ENCODE measurements at regions of chr1 and their contacts with region 1.

Region 1: DNA sequence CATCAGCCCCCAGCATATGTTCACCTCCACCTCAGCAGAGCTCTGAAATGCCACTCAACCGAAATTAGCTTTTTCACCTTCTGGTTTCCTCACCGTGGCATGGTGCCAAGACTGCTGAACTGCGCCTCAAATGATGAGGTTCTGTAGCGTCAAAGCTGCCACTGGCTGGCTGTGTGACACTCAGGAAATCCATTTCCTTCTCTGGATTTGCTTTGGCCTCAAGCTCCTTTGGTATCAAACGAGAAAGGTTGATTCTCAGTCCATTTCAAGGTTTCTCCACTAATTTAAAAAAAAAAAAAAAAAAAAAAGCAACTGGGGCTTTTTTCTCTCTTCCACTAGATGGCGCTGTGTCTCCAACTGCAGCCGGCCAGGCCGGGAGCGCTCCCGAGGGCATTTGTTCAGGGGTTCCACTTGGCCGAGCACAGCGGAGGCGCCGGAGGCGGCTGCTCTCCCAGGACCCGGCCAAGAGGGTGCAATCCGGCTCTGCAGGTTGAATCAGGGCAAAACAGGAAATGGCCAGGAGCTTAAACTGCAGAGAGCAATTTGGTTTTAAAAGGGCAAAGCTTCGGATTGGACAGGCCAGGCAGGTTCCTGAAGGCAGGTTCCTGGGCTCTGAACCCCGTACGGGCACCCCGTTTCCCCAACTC is 26.5 kb upstream of the PLA2G2C start:
- DNase-seq: peak; percentile 31
- ATAC-seq: peak; percentile 86
- H3K4me3 ChIP-seq: peak overlapping the region in 1 of 3 experiments; percentile 38; a peak in 1 of 6 replicates
- H3K27ac ChIP-seq: no peak overlapping the region
- H3K4me1 ChIP-seq: no peaks in the 10 kb centered on the region; the same call in 1 of the 2 replicates
- H3K27me3 ChIP-seq: peaks cover 0 to 39% of the 10 kb centered on the region in 2 experiments; a peak in 3 of 5 replicates
- CTCF ChIP-seq: peak; percentile 68
- EP300 ChIP-seq: no peak
- POLR2A ChIP-seq: no peak
- RAD21 ChIP-seq: peak; percentile 44; the same call in 1 of the 2 replicates

Region 2: DNA sequence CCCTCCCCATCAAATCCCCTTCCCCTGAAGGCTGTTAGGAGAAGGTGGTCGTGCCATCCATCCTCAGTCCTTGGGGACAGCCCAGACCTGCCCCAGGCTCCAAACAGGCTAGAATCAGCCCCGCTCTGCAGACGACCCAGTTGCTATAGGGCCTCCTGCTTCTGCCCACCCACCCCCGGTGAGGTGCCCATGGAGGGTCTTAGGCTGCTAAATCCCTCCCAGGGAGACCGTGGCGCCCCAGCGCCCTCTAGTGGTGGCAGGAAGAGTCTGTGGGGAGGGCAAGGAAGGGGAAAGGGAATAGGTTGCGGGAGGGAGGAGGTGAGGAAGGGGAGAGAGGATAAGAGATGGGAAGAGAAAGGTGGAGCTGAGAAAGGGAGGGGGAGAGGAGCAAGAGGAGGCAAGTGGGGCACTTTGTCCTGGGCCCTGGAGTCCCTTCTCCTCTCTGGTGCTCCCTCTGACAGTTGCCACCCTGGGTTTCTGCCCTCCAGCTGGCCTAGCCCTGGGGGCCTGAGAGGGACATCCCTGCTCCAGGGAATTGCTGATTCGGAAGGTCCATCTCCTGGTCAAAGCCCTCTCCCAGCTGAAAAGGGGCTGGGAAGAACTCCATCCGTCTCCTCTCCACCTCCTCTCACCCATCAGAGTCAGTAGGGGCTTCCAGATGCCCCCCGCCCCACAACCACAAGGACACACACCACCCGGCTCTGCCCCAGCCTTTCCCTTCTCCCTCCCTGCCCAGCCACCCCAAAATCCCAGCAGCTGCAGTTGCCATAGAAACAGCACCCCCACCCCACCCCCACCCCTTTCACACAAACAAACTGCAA is 217.8 kb after region 1 on chr1:
- CTCF ChIA-PET with region 1: interaction called, 5 read pairs
- POLR2A ChIA-PET with region 1: no interaction called
- in situ Hi-C with region 1: loop called (anchors 10 kb)
- intact Hi-C with region 1: no loop called
- DNase-seq: peak; percentile 24
- ATAC-seq: peak; percentile 80
- H3K4me3 ChIP-seq: no peak overlapping the region
- H3K27ac ChIP-seq: no peak overlapping the region
- H3K4me1 ChIP-seq: no peaks in the 10 kb centered on the region
- H3K27me3 ChIP-seq: peaks cover 0 to 11% of the 10 kb centered on the region in 2 experiments; a peak in 2 of 5 replicates
- CTCF ChIP-seq: peak; percentile 91
- EP300 ChIP-seq: no peak
- POLR2A ChIP-seq: no peak
- RAD21 ChIP-seq: peak; percentile 41; the same call in 1 of the 2 replicates

Measured in HepG2 (cell line).